Natural killer cell (primary cell): ENCODE measurements at regions of chr17 and their contacts with region 1.

Region 1: DNA sequence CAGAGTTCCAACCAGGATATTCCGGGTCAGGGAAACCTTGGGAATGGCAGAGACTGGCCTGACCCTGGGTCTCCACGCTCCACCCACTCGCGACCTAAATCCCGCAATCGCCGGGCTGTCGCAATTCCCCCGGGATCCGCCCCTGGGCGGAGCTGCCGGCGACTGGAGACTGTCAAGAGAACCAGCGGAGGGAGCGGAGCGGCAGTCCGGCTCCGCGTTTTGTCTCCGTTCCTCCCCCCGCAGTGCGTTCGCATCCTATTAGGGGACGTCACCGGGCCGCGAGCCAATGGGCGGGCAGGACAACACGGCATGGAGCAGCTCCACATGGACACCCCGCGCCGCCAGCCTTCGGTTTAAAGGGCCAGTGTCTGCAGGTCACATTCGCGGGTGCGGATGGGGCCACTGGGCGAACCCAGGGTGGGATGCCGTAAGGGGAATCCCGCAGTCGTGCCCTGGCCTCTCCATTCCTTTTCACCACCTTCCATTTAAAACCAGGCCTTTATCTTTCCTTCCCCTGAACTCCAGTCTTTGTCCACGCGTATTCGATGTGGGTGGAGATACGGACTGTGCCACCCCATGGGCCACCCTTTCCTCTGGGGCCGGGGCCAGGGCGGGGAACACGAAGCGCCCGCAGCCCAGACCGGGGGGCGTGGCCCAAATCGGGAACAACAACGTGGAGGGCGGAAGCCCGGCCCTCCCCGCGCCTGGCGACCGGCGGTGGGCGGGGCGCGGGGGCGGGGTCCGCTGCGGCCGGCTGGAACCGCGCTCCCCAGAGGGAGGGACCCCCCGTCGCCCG is 764 bp upstream of the MNT start:
- DNase-seq: peak; percentile 99 to 100
- ATAC-seq: peak; percentile 52 to 80 (median 67)
- H3K4me3 ChIP-seq: peak overlapping the region; percentile 61
- H3K4me3 Mint-ChIP-seq: peak overlapping the region; percentile 97
- H3K27ac ChIP-seq: peak overlapping the region; percentile 98
- H3K27ac Mint-ChIP-seq: peak overlapping the region; percentile 93 to 99
- H3K4me1 ChIP-seq: peaks cover 39% of the 10 kb centered on the region
- H3K4me1 Mint-ChIP-seq: peaks cover 25 to 52% of the 10 kb centered on the region in 2 donors
- H3K27me3 ChIP-seq: no peaks in the 10 kb centered on the region
- H3K27me3 Mint-ChIP-seq: no peaks in the 10 kb centered on the region
- CTCF ChIP-seq: no peak

Region 2: GRCh38 chr17:2041561-2042366 is 359.9 kb before region 1 on chr17 and contains the start of gene OVCA2:
- intact Hi-C with region 1: loop called (anchors 5 kb)
- DNase-seq: peak; percentile 94 to 99
- ATAC-seq: peak; percentile 93 to 95 (median 95)
- H3K4me3 ChIP-seq: peak within 1 kb of the TSS; percentile 71
- H3K4me3 Mint-ChIP-seq: peak within 1 kb of the TSS; percentile 92
- H3K27ac ChIP-seq: peak within 1 kb of the TSS; percentile 85
- H3K27ac Mint-ChIP-seq: peak within 1 kb of the TSS; percentile 89 to 98
- H3K4me1 ChIP-seq: peaks cover 22% of the 10 kb centered on the region
- H3K4me1 Mint-ChIP-seq: peaks cover 17 to 18% of the 10 kb centered on the region in 2 donors
- H3K27me3 ChIP-seq: no peaks in the 10 kb centered on the region
- H3K27me3 Mint-ChIP-seq: no peaks in the 10 kb centered on the region
- CTCF ChIP-seq: peak; percentile 54
- total RNA-seq, gene OVCA2: 27.9 to 33.8 (median 28.5) TPM

Region 3: DNA sequence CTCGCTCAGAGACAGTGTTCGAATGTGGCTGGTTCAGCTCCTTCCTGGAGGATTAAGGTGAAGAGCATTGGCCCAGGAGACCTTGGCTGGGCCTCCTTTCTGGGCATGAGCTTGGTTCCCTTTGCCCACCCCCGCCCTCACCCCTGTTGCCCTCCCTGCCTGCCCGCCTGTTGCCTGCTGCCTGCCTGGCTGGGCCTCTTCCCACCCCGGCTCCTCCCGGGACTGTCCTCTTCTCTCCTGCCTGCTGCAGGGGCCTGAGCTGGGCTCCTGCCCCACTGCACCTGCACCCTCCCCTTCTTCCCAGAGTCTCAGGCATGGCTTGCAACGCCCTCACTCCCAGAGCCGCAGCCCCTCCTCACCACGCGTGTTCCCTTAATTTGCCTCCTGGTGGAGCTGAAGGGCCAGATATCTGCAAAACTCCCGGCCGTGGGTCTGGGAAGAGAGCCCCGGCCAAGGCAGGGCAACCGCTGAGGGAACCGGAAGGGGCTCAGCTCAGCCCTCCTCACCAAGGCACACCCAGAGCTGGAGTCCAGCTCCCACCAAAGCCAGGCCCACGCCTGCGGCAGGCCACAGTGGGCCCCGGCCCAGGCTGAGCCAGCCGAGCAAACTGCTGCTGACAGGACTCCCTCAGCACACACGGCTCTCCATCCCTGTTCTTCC is 31.9 kb before region 1 on chr17:
- intact Hi-C with region 1: no loop called
- DNase-seq: no peak
- ATAC-seq: no peak
- H3K4me3 ChIP-seq: no peak overlapping the region
- H3K4me3 Mint-ChIP-seq: no peak overlapping the region
- H3K27ac ChIP-seq: no peak overlapping the region
- H3K27ac Mint-ChIP-seq: no peak overlapping the region
- H3K4me1 ChIP-seq: no peaks in the 10 kb centered on the region
- H3K4me1 Mint-ChIP-seq: no peaks in the 10 kb centered on the region
- H3K27me3 ChIP-seq: no peaks in the 10 kb centered on the region
- H3K27me3 Mint-ChIP-seq: no peaks in the 10 kb centered on the region
- CTCF ChIP-seq: no peak